OCI-LY7 (cell line): ENCODE measurements at regions of chr22 and their contacts with region 1.

Region 1: GRCh38 chr22:40645579-40646197 is 9.2 kb upstream of the MRTFA start:
- DNase-seq: no peak
- H3K4me3 ChIP-seq: no peak overlapping the region
- H3K27ac ChIP-seq: no peak overlapping the region
- H3K4me1 ChIP-seq: peaks cover 33% of the 10 kb centered on the region
- CTCF ChIP-seq: no peak

Region 2: GRCh38 chr22:40525249-40525884 is 120.3 kb before region 1 on chr22:
- CTCF ChIA-PET with region 1: interaction called, 8 read pairs
- POLR2A ChIA-PET with region 1: interaction called, 3 read pairs
- intact Hi-C with region 1: loop called (anchors 1 kb)
- DNase-seq: peak; percentile 72
- H3K4me3 ChIP-seq: no peak overlapping the region
- H3K27ac ChIP-seq: no peak overlapping the region
- H3K4me1 ChIP-seq: peaks cover 16% of the 10 kb centered on the region
- CTCF ChIP-seq: peak; percentile 98

Region 3: DNA sequence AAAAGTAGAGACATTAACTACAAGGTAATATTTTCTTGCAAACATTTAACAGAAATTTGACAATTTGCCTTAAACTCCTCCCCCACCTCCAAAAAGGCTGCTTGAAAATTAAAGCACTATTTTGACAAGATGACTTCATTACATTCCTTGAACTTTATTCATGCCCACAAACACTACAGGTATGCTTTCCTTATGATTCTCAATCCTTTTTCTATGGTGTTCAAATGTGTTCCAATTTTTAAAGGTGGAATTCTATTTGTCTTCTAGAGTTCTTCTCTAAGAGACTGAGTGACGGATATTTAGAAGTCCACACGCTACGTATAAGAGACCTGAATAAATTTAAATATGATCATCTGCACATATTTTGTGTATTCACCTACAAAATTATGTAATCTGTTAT is 78.6 kb before region 1 on chr22:
- CTCF ChIA-PET with region 1: no interaction called
- POLR2A ChIA-PET with region 1: no interaction called
- intact Hi-C with region 1: no loop called
- DNase-seq: no peak
- H3K4me3 ChIP-seq: no peak overlapping the region
- H3K27ac ChIP-seq: no peak overlapping the region
- H3K4me1 ChIP-seq: peaks cover 4% of the 10 kb centered on the region
- CTCF ChIP-seq: no peak

Region 4: DNA sequence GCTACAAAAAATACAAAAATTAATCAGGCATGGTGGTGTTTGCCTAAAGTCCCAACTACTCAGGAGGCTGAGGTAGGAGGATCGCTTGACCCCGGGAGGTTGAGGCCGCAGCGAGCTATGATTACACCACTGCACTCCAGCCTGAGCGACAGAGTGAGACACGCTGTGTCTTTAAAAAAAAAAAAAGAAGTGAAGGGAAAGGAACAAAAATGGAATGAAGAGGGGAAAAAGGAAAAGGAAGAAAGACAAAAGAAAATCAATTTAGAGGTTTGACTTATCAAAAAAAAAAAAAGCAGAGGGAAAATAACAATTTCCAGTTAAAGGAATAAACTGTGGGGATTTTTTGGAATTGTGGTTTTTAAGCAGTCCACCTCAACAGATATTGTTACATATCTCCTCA is 46.0 kb before region 1 on chr22:
- CTCF ChIA-PET with region 1: no interaction called
- POLR2A ChIA-PET with region 1: interaction called, 11 read pairs
- intact Hi-C with region 1: no loop called
- DNase-seq: no peak
- H3K4me3 ChIP-seq: no peak overlapping the region
- H3K27ac ChIP-seq: no peak overlapping the region
- H3K4me1 ChIP-seq: peaks cover 33% of the 10 kb centered on the region
- CTCF ChIP-seq: no peak

Region 5: GRCh38 chr22:41280066-41280465 is 634.4 kb after region 1 on chr22:
- CTCF ChIA-PET with region 1: no interaction called
- POLR2A ChIA-PET with region 1: no interaction called
- intact Hi-C with region 1: no loop called
- DNase-seq: no peak
- H3K4me3 ChIP-seq: no peak overlapping the region
- H3K27ac ChIP-seq: no peak overlapping the region
- H3K4me1 ChIP-seq: peaks cover 12% of the 10 kb centered on the region
- CTCF ChIP-seq: no peak